OCI-LY7 (cell line): ENCODE measurements at regions of chr1 and their contacts with region 1.

Region 1: DNA sequence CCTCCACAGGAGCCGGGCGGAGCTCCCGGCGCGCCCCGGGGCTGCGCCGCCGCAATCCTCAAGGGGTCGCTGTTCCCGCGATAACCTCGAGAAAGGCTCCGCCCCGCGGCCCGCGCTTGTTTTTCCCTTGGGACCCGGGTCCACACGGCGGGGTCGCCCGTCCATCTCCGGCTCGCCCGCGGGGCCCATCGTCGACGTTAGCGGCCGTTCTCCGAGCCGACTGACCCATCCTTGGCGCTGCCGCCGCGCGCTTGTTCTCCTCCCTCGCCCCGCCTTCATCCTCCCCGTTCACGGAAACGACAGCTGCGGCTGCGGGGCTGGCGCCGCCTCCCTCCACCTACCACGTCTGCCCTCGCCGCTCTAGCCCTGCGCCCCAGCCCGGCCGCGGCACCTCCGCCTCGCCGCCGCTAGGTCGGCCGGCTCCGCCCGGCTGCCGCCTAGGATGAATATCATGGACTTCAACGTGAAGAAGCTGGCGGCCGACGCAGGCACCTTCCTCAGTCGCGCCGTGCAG is at the start of gene SH3GLB1:
- DNase-seq: peak; percentile 93
- H3K4me3 ChIP-seq: peak within 1 kb of the TSS; percentile 82
- H3K27ac ChIP-seq: peak within 1 kb of the TSS; percentile 89
- H3K4me1 ChIP-seq: peaks cover 30% of the 10 kb centered on the region
- CTCF ChIP-seq: peak; percentile 90
- total RNA-seq, gene SH3GLB1: 17.7 and 18.9 TPM in 2 replicates

Region 2: GRCh38 chr1:86616871-86617270 is 87.6 kb before region 1 on chr1:
- CTCF ChIA-PET with region 1: no interaction called
- POLR2A ChIA-PET with region 1: no interaction called
- intact Hi-C with region 1: loop called (anchors 5 kb)
- DNase-seq: peak; percentile 93
- H3K4me3 ChIP-seq: no peak overlapping the region
- H3K27ac ChIP-seq: peak overlapping the region; percentile 39
- H3K4me1 ChIP-seq: peaks cover 22% of the 10 kb centered on the region
- CTCF ChIP-seq: no peak

Region 3: GRCh38 chr1:86687595-86687994 is 16.9 kb before region 1 on chr1:
- CTCF ChIA-PET with region 1: no interaction called
- POLR2A ChIA-PET with region 1: no interaction called
- intact Hi-C with region 1: no loop called
- DNase-seq: peak; percentile 25
- H3K4me3 ChIP-seq: no peak overlapping the region
- H3K27ac ChIP-seq: no peak overlapping the region
- H3K4me1 ChIP-seq: no peaks in the 10 kb centered on the region
- CTCF ChIP-seq: peak; percentile 72

Region 4: DNA sequence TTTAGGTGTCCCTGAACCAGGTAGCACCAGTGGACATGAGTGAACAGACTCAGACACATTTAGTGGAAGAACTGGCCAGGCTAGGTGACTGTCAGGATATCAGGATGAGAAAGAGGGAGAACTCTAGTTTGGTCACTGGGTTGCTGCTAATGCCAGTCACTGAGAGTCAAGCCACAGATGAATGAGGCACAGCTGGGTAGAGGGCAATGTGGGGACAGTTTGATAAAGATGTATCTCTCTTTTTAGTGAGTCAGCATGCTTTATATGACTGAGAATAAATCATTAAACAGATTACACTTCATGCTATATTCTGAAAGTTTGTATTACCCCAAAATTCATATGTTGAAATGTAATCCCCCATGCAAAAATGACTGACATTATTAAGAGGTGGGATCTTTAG is 122.3 kb after region 1 on chr1:
- CTCF ChIA-PET with region 1: interaction called, 4 read pairs
- POLR2A ChIA-PET with region 1: interaction called, 5 read pairs
- intact Hi-C with region 1: loop called (anchors 1 kb)
- DNase-seq: no peak
- H3K4me3 ChIP-seq: no peak overlapping the region
- H3K27ac ChIP-seq: peak overlapping the region; percentile 63
- H3K4me1 ChIP-seq: peaks cover 80% of the 10 kb centered on the region
- CTCF ChIP-seq: no peak

Region 5: GRCh38 chr1:86913896-86914634 is 209.6 kb after region 1 on chr1 and contains the start of gene SELENOF:
- CTCF ChIA-PET with region 1: no interaction called
- POLR2A ChIA-PET with region 1: interaction called, 8 read pairs
- intact Hi-C with region 1: loop called (anchors 2 kb)
- DNase-seq: peak; percentile 100
- H3K4me3 ChIP-seq: peak within 1 kb of the TSS; percentile 94
- H3K27ac ChIP-seq: peak within 1 kb of the TSS; percentile 83
- H3K4me1 ChIP-seq: peaks cover 29% of the 10 kb centered on the region
- CTCF ChIP-seq: no peak
- total RNA-seq, gene SELENOF: 93.0 and 99.4 TPM in 2 replicates

Region 6: GRCh38 chr1:87084244-87084836 is 379.8 kb after region 1 on chr1:
- CTCF ChIA-PET with region 1: no interaction called
- POLR2A ChIA-PET with region 1: interaction called, 9 read pairs
- intact Hi-C with region 1: loop called (anchors 5 kb)
- DNase-seq: peak; percentile 77
- H3K4me3 ChIP-seq: no peak overlapping the region
- H3K27ac ChIP-seq: peak overlapping the region; percentile 64
- H3K4me1 ChIP-seq: peaks cover 36% of the 10 kb centered on the region
- CTCF ChIP-seq: peak; percentile 86